A673 (cell line): ENCODE measurements at regions of chr7 and their contacts with region 1.

Region 1: GRCh38 chr7:39527296-39527695 is 38.9 kb upstream of the YAE1 start:
- DNase-seq: peak; percentile 6
- H3K4me3 ChIP-seq: no peak overlapping the region
- H3K27ac ChIP-seq: no peak overlapping the region
- H3K4me1 ChIP-seq: no peaks in the 10 kb centered on the region
- H3K27me3 ChIP-seq: no peaks in the 10 kb centered on the region
- CTCF ChIP-seq: no peak

Region 2: DNA sequence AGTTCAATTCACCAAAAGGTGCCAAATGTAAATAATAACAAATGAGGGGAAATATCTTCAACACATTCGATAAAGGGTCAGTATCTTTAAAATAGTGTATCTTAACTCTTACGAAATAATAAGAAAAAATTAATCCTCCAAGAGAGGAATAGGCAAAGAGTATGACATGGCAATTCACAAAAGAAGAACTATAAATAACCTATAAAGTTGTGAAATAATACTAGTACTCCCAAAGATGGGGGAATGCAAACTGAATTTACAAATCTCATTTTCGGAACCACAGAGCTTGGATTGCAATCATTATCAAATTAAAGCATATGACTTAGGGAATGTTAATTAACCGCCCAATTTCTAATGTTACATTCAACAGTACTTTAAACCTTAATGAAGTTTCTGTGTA is 1175.7 kb before region 1 on chr7:
- CTCF ChIA-PET with region 1: no interaction called
- POLR2A ChIA-PET with region 1: no interaction called
- intact Hi-C with region 1: no loop called
- DNase-seq: no peak
- H3K4me3 ChIP-seq: no peak overlapping the region
- H3K27ac ChIP-seq: no peak overlapping the region
- H3K4me1 ChIP-seq: no peaks in the 10 kb centered on the region
- H3K27me3 ChIP-seq: no peaks in the 10 kb centered on the region
- CTCF ChIP-seq: no peak

Region 3: DNA sequence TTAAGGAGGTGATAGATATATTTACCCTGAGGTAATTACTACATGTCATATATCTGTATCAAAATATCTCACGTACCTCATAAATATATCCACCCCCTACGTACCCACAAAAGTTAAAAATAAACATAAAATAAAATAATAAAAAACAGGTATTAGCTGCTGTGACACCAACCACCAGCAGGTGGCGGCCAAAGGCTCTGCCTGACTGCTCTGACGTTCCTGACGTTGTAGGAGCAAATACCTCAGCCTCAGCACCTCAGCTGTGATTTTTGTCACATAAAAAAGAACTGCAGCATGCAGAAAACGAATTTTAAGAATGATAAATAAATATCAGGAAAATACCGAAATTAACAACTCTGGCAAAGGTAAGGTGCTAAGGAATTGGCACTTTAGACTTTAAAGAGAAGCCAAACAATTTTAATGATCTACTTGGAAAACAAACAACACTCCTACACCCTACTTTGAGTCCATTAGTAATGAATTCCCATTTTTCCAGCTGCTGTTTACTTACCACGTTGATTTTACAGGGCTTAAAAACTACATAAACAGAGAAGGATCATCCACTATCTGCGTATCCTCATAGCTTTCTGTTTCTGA is 1128.5 kb before region 1 on chr7:
- CTCF ChIA-PET with region 1: no interaction called
- POLR2A ChIA-PET with region 1: no interaction called
- intact Hi-C with region 1: loop called (anchors 10 kb)
- DNase-seq: peak; percentile 55
- H3K4me3 ChIP-seq: no peak overlapping the region
- H3K27ac ChIP-seq: no peak overlapping the region
- H3K4me1 ChIP-seq: no peaks in the 10 kb centered on the region
- H3K27me3 ChIP-seq: no peaks in the 10 kb centered on the region
- CTCF ChIP-seq: peak; percentile 92

Region 4: DNA sequence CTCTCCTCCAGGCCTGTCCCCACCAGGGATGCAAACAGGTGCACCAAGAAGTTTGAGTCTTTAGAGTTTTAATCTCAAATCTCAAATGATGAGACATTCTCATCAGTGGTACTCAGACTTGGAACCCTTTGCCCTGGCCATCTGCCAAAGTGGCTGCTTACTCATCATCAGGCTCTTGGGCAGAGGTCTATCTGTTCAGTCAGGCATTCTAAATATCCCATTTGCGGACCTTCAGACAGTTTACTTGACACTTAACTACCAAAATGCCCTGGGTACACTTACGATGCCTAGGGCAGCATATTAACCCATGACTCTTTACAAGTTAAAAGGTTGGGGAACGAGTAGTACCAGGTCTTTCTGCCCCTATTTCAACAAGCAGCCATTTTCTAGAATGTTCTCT is 22.3 kb before region 1 on chr7:
- CTCF ChIA-PET with region 1: no interaction called
- POLR2A ChIA-PET with region 1: no interaction called
- intact Hi-C with region 1: no loop called
- DNase-seq: peak; percentile 45
- H3K4me3 ChIP-seq: no peak overlapping the region
- H3K27ac ChIP-seq: no peak overlapping the region
- H3K4me1 ChIP-seq: no peaks in the 10 kb centered on the region
- H3K27me3 ChIP-seq: no peaks in the 10 kb centered on the region
- CTCF ChIP-seq: no peak

Region 5: DNA sequence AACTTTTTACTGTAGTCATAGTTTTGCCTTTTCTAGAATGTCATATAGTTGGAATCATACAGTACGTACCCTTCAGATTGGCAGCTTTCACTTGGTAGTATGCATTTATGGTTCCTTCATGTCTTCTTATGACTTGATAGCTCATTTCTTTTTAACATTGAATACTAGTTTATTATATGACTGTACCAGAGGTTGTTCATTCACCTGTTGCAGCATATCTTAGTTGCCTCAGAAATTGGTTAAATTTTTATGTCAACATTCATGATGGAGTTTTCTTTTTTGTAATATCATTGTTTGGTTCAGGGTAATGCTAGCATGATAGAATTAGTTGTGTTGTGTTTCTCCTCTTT is 328.0 kb after region 1 on chr7:
- CTCF ChIA-PET with region 1: no interaction called
- POLR2A ChIA-PET with region 1: no interaction called
- intact Hi-C with region 1: no loop called
- DNase-seq: no peak
- H3K4me3 ChIP-seq: peak overlapping the region; percentile 12
- H3K27ac ChIP-seq: no peak overlapping the region
- H3K4me1 ChIP-seq: no peaks in the 10 kb centered on the region
- H3K27me3 ChIP-seq: no peaks in the 10 kb centered on the region
- CTCF ChIP-seq: no peak